Gastrocnemius medialis (tissue), 4 donors: ENCODE measurements at regions of chr4 and their contacts with region 1.

Region 1: DNA sequence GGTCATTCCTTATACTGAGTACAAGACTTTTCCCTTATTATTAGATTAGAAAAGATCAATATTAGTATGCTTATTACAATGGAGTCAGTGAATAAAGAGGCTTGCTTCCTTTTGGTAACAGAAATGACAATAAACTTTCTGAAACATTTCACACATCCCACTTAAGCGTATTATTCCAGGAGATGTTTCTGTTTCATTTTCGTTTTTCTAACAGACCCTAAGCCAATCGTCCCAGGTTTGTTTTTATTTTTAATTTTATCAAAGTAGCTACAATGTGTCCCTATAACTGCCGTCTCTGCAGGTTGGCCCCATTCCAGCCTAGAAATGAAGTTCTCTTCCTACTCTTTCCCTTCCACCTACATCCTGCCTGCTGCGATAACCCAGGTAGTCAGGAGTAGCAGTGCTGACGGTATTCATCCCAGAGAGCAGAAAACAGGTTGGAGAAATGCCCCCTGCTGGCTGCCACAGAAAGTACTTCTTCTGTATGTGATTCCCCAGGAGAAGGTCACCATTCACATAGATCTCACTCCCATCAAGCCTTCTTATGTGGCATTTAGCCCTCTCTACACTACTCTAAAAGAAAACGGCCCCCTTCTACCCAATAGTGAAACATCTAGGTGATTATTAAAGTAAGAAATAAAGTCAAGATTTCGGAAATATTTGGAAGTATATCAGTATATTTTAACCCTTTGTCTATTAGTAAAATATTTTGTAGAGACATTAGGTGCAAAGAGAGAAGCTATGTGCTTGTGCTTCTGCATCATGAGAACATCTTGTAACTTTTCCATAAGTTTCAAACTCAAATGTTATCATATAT is 40.4 kb downstream of the ENPEP start:
- DNase-seq: peak in 1 of 2 donors; percentile 53
- ATAC-seq: peak; percentile 68 to 88
- H3K4me3 ChIP-seq: peak overlapping the region; percentile 16 to 52 (median 28)
- H3K27ac ChIP-seq: peak overlapping the region in 1 of 4 donors; percentile 30
- H3K4me1 ChIP-seq: no peaks in the 10 kb centered on the region
- H3K27me3 ChIP-seq: no peaks in the 10 kb centered on the region
- CTCF ChIP-seq: peak; percentile 36 to 67 (median 57)
- POLR2A ChIP-seq: no peak

Region 2: GRCh38 chr4:109494563-109494962 is 1021.8 kb before region 1 on chr4:
- in situ Hi-C with region 1: no loop called
- intact Hi-C with region 1: no loop called
- DNase-seq: no peak
- ATAC-seq: no peak
- H3K4me3 ChIP-seq: no peak overlapping the region
- H3K27ac ChIP-seq: no peak overlapping the region
- H3K4me1 ChIP-seq: peaks cover 0 to 8% of the 10 kb centered on the region in 2 donors
- H3K27me3 ChIP-seq: no peaks in the 10 kb centered on the region
- CTCF ChIP-seq: no peak
- POLR2A ChIP-seq: no peak

Region 3: GRCh38 chr4:109998867-109999584 is 517.3 kb before region 1 on chr4:
- in situ Hi-C with region 1: loop called in 3 of 4 experiments (anchors 5 to 10 kb)
- intact Hi-C with region 1: loop called (anchors 2 kb)
- DNase-seq: no peak
- ATAC-seq: peak in 1 of 2 donors; percentile 56
- H3K4me3 ChIP-seq: no peak overlapping the region
- H3K27ac ChIP-seq: no peak overlapping the region
- H3K4me1 ChIP-seq: no peaks in the 10 kb centered on the region
- H3K27me3 ChIP-seq: no peaks in the 10 kb centered on the region
- CTCF ChIP-seq: peak in 3 of 5 experiments; percentile 43 to 60 (median 51)
- POLR2A ChIP-seq: no peak

Region 4: DNA sequence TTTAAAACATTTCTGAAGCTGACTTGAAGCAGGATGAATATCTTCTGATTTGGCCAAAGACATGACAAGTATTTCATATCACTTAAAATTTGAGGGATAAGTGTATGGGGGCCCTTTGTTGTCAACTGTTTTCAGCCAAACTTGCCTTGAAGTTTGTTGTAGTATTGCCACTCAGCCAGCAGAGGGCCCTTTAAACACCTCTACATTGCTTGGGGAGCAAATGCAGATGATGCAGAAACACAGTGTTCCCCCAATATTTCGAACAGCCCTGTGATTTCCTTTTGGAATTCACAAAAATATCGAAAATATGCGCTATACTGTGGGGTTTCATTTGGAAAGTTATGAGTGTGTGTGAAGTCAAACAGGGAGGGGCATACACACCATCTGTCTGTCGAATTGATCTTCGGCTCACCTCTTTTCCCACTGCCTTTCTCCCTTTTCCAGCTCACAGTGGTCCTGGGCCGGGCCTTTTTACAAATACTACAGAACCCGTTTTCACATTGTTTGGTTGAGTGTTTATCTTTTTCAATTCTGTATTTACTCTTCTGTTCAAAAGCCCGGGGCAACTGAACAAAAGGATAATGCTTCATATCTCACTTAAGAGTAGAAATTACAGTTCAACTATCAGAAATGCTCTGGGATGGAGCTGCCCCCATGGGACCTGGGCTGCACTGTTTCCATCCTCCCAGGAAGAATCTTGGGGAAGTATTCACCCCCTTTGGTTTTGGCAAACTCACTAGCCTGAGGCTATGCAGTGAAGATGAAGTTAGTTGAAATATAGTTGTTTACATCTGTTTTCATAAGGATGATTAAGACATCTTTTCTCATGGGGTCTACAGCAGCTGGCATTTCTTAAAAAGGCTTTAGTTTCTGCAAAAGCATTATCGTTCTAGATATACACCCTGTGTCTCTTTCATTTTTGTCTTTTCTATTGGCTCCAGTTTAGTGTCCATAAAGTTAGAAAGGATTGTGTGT is 466.1 kb before region 1 on chr4:
- in situ Hi-C with region 1: no loop called
- intact Hi-C with region 1: loop called (anchors 2 kb)
- DNase-seq: no peak
- ATAC-seq: peak in 1 of 2 donors; percentile 39
- H3K4me3 ChIP-seq: no peak overlapping the region
- H3K27ac ChIP-seq: no peak overlapping the region
- H3K4me1 ChIP-seq: no peaks in the 10 kb centered on the region
- H3K27me3 ChIP-seq: no peaks in the 10 kb centered on the region
- CTCF ChIP-seq: peak; percentile 53 to 74 (median 63)
- POLR2A ChIP-seq: no peak

Region 5: GRCh38 chr4:110310795-110311194 is 205.5 kb before region 1 on chr4:
- in situ Hi-C with region 1: no loop called
- intact Hi-C with region 1: loop called (anchors 1 kb)
- DNase-seq: no peak
- ATAC-seq: no peak
- H3K4me3 ChIP-seq: no peak overlapping the region
- H3K27ac ChIP-seq: no peak overlapping the region
- H3K4me1 ChIP-seq: peaks cover 7% of the 10 kb centered on the region in 2 donors
- H3K27me3 ChIP-seq: no peaks in the 10 kb centered on the region
- CTCF ChIP-seq: no peak
- POLR2A ChIP-seq: no peak

Region 6: GRCh38 chr4:110586131-110586850 is 70.0 kb after region 1 on chr4:
- in situ Hi-C with region 1: no loop called
- intact Hi-C with region 1: loop called (anchors 5 kb)
- DNase-seq: no peak
- ATAC-seq: peak; percentile 79 to 82
- H3K4me3 ChIP-seq: peak overlapping the region; percentile 35 to 52 (median 42)
- H3K27ac ChIP-seq: peak overlapping the region in 2 of 4 donors; percentile 31 to 57
- H3K4me1 ChIP-seq: no peaks in the 10 kb centered on the region
- H3K27me3 ChIP-seq: no peaks in the 10 kb centered on the region
- CTCF ChIP-seq: peak in 3 of 5 experiments; percentile 44 to 67 (median 48)
- POLR2A ChIP-seq: no peak

Region 7: DNA sequence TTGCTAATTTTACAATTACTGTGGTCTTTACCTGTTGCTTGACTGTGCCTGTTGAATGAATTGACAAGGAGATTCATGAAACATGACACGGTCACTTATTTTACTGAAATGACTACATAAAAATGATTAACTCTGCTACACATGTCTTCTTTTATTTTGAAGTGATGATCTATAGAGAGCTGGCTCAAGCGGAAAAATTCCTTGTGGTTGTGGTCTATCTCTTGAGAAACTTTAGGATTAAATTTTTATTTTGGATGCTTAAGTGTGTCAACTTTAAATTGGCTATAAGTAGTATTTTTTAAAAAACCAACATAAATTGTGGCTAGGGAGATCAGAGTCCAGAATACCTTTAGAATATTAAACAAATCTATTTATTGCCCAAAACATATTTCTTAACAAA is 238.4 kb after region 1 on chr4:
- in situ Hi-C with region 1: no loop called
- intact Hi-C with region 1: no loop called
- DNase-seq: no peak
- ATAC-seq: no peak
- H3K4me3 ChIP-seq: no peak overlapping the region
- H3K27ac ChIP-seq: no peak overlapping the region
- H3K4me1 ChIP-seq: no peaks in the 10 kb centered on the region
- H3K27me3 ChIP-seq: no peaks in the 10 kb centered on the region
- CTCF ChIP-seq: no peak
- POLR2A ChIP-seq: no peak